PC-3 (cell line): ENCODE measurements at regions of chr20 and their contacts with region 1.

Region 1: DNA sequence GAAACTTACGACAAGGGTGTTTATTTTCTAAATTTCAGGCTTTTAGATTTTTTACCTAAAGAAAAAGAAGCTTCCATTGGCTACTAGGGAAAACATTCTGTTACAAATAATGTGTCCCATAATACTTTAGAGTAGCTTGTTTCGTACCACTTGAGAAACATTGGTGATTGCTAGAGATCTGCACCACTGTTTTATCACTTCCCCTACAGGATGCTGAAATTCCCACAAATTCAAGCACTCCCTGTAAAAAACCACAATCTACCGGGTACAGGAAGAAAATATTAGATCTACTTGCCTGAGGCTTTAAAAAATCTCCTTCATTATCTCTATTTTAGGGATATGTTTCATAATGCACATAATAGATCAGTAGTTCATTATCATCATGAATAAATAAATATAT is 29.9 kb downstream of the SEL1L2 start:
- DNase-seq: peak; percentile 50
- ATAC-seq: peak; percentile 80
- H3K4me3 ChIP-seq: no peak overlapping the region
- H3K27ac ChIP-seq: no peak overlapping the region
- H3K4me1 ChIP-seq: no peaks in the 10 kb centered on the region
- H3K27me3 ChIP-seq: no peaks in the 10 kb centered on the region
- CTCF ChIP-seq: no peak

Region 2: DNA sequence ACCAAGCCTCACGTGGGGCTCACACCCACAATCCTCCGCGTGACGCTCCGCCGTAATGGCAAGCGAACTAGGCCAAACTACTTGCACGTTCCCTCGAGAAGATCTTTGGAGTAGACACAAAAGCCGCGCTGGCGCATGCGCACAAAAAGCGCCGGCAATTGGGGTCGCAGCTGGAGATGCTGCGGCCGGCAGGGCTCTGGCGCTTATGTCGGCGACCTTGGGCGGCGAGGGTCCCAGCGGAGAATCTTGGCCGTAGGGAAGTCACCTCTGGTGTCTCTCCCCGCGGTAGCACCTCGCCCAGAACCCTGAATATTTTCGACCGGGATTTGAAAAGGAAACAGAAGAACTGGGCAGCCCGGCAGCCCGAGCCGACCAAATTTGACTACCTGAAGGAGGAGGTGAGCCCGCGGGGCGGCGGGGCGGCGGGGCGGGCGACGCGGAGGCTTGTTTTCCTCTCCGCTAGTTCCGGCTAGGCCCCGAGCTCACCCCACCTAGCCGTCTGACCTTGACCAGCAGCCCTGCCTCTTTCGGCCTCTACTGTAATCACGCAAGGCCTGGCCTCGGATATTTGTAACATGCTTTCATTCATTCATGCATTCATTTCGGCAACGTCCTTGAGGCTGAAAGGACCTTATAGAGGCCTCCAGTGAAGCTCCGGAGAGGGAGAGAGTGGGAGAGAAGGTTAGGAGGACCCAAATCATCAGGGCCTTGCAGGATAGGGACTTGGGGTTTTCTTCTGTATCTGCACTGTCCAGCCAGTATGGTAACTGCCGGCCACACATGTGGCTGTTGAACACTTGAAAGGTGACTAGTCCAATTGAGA is 175.4 kb before region 1 on chr20 and contains the starts of genes ESF1 and NDUFAF5:
- CTCF ChIA-PET with region 1: no interaction called
- POLR2A ChIA-PET with region 1: no interaction called
- intact Hi-C with region 1: no loop called
- DNase-seq: peak; percentile 98
- ATAC-seq: peak; percentile 80
- H3K4me3 ChIP-seq: peak within 1 kb of the TSS; percentile 82
- H3K27ac ChIP-seq: peak within 1 kb of the TSS; percentile 66
- H3K4me1 ChIP-seq: peaks cover 19% of the 10 kb centered on the region
- H3K27me3 ChIP-seq: no peaks in the 10 kb centered on the region
- CTCF ChIP-seq: no peak
- total RNA-seq, gene ESF1: 13.7 and 18.7 TPM in 2 replicates
- total RNA-seq, gene NDUFAF5: 23.3 and 29.0 TPM in 2 replicates

Region 3: DNA sequence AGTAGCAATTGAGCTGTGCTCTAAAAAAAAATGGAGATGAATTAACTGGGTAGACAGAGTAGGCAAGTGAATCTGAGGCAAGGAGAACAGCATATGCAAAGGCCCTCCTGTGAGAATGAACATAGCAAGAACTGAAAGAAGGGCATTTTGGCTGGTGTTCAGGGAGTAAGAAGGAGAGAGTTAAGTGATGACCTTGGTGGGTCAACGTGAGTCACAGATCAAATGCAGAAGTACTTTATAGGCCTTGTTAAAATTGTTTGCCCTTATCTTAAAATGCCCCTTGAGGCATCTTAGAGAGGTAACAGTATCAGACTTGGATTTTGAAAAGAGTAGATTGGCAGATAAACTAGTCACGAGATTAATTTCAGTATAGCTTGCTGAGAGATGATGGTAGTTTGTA is 151.2 kb before region 1 on chr20:
- CTCF ChIA-PET with region 1: no interaction called
- POLR2A ChIA-PET with region 1: no interaction called
- intact Hi-C with region 1: no loop called
- DNase-seq: no peak
- ATAC-seq: no peak
- H3K4me3 ChIP-seq: no peak overlapping the region
- H3K27ac ChIP-seq: no peak overlapping the region
- H3K4me1 ChIP-seq: no peaks in the 10 kb centered on the region
- H3K27me3 ChIP-seq: no peaks in the 10 kb centered on the region
- CTCF ChIP-seq: no peak

Region 4: GRCh38 chr20:13819885-13820645 is 140.5 kb before region 1 on chr20:
- CTCF ChIA-PET with region 1: no interaction called
- POLR2A ChIA-PET with region 1: no interaction called
- intact Hi-C with region 1: loop called (anchors 10 kb)
- DNase-seq: peak; percentile 95
- ATAC-seq: peak; percentile 72
- H3K4me3 ChIP-seq: no peak overlapping the region
- H3K27ac ChIP-seq: no peak overlapping the region
- H3K4me1 ChIP-seq: peaks cover 21% of the 10 kb centered on the region
- H3K27me3 ChIP-seq: no peaks in the 10 kb centered on the region
- CTCF ChIP-seq: peak; percentile 78